ENCODE measurements at regions of chr6 and their contacts with region 1.

Region 1: GRCh38 chr6:157873735-157874344 is 50.8 kb downstream of the SNX9 start:
- DNase-seq: peak; percentile 79
- H3K4me3 ChIP-seq: no peak overlapping the region
- H3K27ac ChIP-seq: no peak overlapping the region
- H3K4me1 ChIP-seq: no peaks in the 10 kb centered on the region
- H3K27me3 ChIP-seq: no peaks in the 10 kb centered on the region
- CTCF ChIP-seq: peak; percentile 88

Region 2: GRCh38 chr6:155882527-155883333 is 1991.1 kb before region 1 on chr6:
- CTCF ChIA-PET with region 1: no interaction called
- POLR2A ChIA-PET with region 1: interaction called, 13 read pairs
- intact Hi-C with region 1: no loop called
- DNase-seq: no peak
- H3K4me3 ChIP-seq: no peak overlapping the region
- H3K27ac ChIP-seq: no peak overlapping the region
- H3K4me1 ChIP-seq: no peaks in the 10 kb centered on the region
- H3K27me3 ChIP-seq: no peaks in the 10 kb centered on the region
- CTCF ChIP-seq: no peak

Region 3: GRCh38 chr6:157756708-157757429 is 117.0 kb before region 1 on chr6:
- CTCF ChIA-PET with region 1: interaction called, 11 read pairs
- POLR2A ChIA-PET with region 1: no interaction called
- intact Hi-C with region 1: loop called (anchors 1 kb)
- DNase-seq: peak; percentile 87
- H3K4me3 ChIP-seq: peak overlapping the region; percentile 14
- H3K27ac ChIP-seq: no peak overlapping the region
- H3K4me1 ChIP-seq: peaks cover 4% of the 10 kb centered on the region
- H3K27me3 ChIP-seq: no peaks in the 10 kb centered on the region
- CTCF ChIP-seq: peak; percentile 90

Region 4: DNA sequence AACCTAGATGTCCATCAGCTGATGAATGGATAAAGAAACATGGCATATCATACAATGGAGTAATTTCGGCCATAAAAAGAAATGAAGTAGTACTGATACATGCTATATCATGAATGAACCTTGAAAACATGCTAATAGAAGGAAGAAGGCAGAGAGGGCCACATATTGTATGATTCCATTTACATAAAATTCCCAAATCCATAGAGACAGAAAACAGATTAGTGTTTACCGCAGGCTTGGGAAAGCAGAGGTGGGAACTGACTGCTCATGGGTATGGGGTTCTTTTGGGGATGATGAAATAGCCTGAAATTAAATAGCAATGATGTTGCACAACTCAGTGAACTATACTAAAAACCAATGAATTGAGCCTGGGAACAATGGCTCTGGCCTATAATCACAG is 235.9 kb after region 1 on chr6:
- CTCF ChIA-PET with region 1: interaction called, 20 read pairs
- POLR2A ChIA-PET with region 1: no interaction called
- intact Hi-C with region 1: no loop called
- DNase-seq: no peak
- H3K4me3 ChIP-seq: no peak overlapping the region
- H3K27ac ChIP-seq: no peak overlapping the region
- H3K4me1 ChIP-seq: no peaks in the 10 kb centered on the region
- H3K27me3 ChIP-seq: no peaks in the 10 kb centered on the region
- CTCF ChIP-seq: no peak